CD4-positive, alpha-beta memory T cell (primary cell): ENCODE measurements at regions of chrX and their contacts with region 1.

Region 1: GRCh38 chrX:119871599-119872395 is at the starts of genes NDUFA1 and RNF113A:
- DNase-seq: peak; percentile 86 to 91 (median 89)
- H3K4me3 ChIP-seq: peak within 1 kb of the TSS; percentile 78 to 89
- H3K4me3 Mint-ChIP-seq: peak within 1 kb of the TSS; percentile 93 to 100 (median 96)
- H3K27ac ChIP-seq: peak within 1 kb of the TSS; percentile 85
- H3K27ac Mint-ChIP-seq: peak within 1 kb of the TSS; percentile 98 to 100 (median 98)
- H3K4me1 ChIP-seq: peaks cover 15% of the 10 kb centered on the region
- H3K4me1 Mint-ChIP-seq: peaks cover 3 to 39% (median 17%) of the 10 kb centered on the region in 4 donors
- H3K27me3 ChIP-seq: no peaks in the 10 kb centered on the region
- H3K27me3 Mint-ChIP-seq: no peaks in the 10 kb centered on the region
- total RNA-seq, gene NDUFA1: 59.7 to 62.4 TPM
- total RNA-seq, gene RNF113A: 43.0 to 45.3 TPM

Region 2: DNA sequence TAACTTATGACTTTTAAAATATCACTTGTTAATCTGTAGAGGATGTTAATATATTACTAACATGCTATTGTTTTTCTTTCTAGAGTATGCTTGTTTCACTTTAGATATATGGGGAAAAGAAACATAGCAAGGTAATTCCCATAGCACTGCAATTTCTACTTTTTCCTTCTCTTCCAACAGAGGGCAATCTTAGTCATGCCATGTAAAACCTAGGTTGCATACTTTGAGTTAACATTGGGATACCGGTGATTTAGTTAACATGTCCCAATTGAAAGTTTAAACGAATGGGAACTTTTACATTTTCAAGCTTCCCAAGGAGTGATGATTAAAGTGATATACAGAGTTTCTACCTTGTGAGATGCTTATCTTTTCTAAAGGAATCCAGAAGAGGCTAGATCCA is 1233.8 kb before region 1 on chrX:
- CTCF ChIA-PET with region 1: no interaction called
- POLR2A ChIA-PET with region 1: no interaction called
- intact Hi-C with region 1: no loop called
- DNase-seq: no peak
- H3K4me3 ChIP-seq: no peak overlapping the region
- H3K4me3 Mint-ChIP-seq: no peak overlapping the region
- H3K27ac ChIP-seq: no peak overlapping the region
- H3K27ac Mint-ChIP-seq: peak overlapping the region in 1 of 7 donors; percentile 35
- H3K4me1 ChIP-seq: no peaks in the 10 kb centered on the region
- H3K4me1 Mint-ChIP-seq: no peaks in the 10 kb centered on the region
- H3K27me3 ChIP-seq: no peaks in the 10 kb centered on the region
- H3K27me3 Mint-ChIP-seq: no peaks in the 10 kb centered on the region

Region 3: DNA sequence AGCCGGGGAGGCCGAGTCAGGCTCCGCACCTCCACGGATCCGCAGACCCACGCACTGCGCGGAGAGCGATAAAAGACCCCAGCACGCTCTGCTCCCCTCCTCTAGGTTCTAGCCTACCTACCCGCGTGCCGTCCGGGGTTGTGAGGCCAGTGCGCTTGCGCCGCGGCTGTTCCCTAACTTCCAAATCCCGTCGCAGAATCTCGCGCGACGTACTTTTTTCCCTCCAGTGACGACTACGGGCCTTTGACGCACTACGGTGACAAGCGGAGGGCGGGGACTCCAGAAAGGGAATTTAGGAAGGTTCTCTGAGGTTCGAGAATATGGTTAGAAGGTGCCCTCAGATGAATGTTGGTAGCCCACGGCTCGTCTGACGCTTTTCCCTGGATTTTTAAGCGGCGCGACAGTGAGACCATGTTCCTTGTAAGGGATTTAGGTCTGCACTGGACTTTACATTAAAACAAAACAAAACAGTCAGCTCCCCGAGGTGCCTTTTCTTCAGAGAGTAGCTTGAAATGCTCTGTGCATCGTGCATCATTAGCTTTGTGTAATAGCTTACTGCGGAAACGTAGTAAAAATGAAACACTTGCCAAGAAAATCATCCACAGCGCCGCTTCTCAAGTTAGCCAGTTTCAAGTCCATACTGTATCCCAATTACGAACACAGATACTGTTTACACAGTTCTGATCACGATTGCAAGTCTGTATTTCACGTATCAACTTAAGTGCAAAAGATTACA is 265.3 kb before region 1 on chrX and contains the start of gene NKRF:
- CTCF ChIA-PET with region 1: no interaction called
- POLR2A ChIA-PET with region 1: no interaction called
- intact Hi-C with region 1: loop called (anchors 2 kb)
- DNase-seq: peak; percentile 87 to 94 (median 89)
- H3K4me3 ChIP-seq: peak within 1 kb of the TSS; percentile 73 to 84
- H3K4me3 Mint-ChIP-seq: peak within 1 kb of the TSS; percentile 91 to 97 (median 95)
- H3K27ac ChIP-seq: peak within 1 kb of the TSS; percentile 85
- H3K27ac Mint-ChIP-seq: peak within 1 kb of the TSS; percentile 93 to 99 (median 99)
- H3K4me1 ChIP-seq: peaks cover 26% of the 10 kb centered on the region
- H3K4me1 Mint-ChIP-seq: peaks cover 10 to 46% (median 28%) of the 10 kb centered on the region in 4 donors
- H3K27me3 ChIP-seq: no peaks in the 10 kb centered on the region
- H3K27me3 Mint-ChIP-seq: no peaks in the 10 kb centered on the region
- total RNA-seq, gene NKRF: 13.0 to 14.2 TPM

Region 4: GRCh38 chrX:119655125-119655524 is 216.7 kb before region 1 on chrX:
- CTCF ChIA-PET with region 1: no interaction called
- POLR2A ChIA-PET with region 1: no interaction called
- intact Hi-C with region 1: no loop called
- DNase-seq: peak in 2 of 5 donors; percentile 41 to 79
- H3K4me3 ChIP-seq: no peak overlapping the region
- H3K4me3 Mint-ChIP-seq: peak overlapping the region in 5 of 8 donors; percentile 40 to 72 (median 59)
- H3K27ac ChIP-seq: peak overlapping the region; percentile 41
- H3K27ac Mint-ChIP-seq: peak overlapping the region; percentile 80 to 96 (median 91)
- H3K4me1 ChIP-seq: peaks cover 24% of the 10 kb centered on the region
- H3K4me1 Mint-ChIP-seq: peaks cover 26 to 50% (median 42%) of the 10 kb centered on the region in 4 donors
- H3K27me3 ChIP-seq: no peaks in the 10 kb centered on the region
- H3K27me3 Mint-ChIP-seq: no peaks in the 10 kb centered on the region

Region 5: DNA sequence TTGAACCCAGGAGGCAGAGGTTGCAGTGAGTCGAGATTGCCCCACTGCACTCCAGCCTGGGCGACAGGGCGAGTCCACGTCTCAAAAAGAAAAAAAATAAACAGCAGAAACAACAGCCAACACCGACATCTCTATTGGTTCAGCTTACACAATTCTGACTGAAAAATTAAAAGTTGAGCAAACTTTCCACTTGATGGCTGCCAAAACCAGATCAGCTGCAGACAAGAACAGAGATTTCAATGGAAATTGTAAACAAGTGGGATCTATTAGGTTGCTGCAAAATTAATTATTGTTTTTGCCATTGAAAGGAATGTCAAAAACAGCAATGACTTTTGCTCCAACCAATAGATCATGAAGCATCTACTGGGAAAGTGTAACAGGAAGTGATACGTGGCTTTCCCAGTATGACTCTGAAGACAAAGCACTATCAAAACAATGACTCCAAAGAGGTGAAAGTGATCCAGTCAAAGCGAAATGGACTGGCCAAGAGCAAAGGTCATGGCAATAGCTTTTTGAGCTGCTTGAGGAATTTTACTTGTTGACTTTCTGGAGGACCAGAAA is 45.3 kb before region 1 on chrX:
- CTCF ChIA-PET with region 1: no interaction called
- POLR2A ChIA-PET with region 1: interaction called, 11 read pairs
- intact Hi-C with region 1: no loop called
- DNase-seq: no peak
- H3K4me3 ChIP-seq: no peak overlapping the region
- H3K4me3 Mint-ChIP-seq: no peak overlapping the region
- H3K27ac ChIP-seq: no peak overlapping the region
- H3K27ac Mint-ChIP-seq: no peak overlapping the region
- H3K4me1 ChIP-seq: peaks cover 8% of the 10 kb centered on the region
- H3K4me1 Mint-ChIP-seq: peaks cover 6 to 20% (median 9%) of the 10 kb centered on the region in 4 donors
- H3K27me3 ChIP-seq: no peaks in the 10 kb centered on the region
- H3K27me3 Mint-ChIP-seq: no peaks in the 10 kb centered on the region

Region 6: GRCh38 chrX:119887721-119888425 is 16.1 kb after region 1 on chrX:
- CTCF ChIA-PET with region 1: interaction called, 3 read pairs
- POLR2A ChIA-PET with region 1: interaction called, 5 read pairs
- intact Hi-C with region 1: loop called (anchors 2 kb)
- DNase-seq: peak; percentile 40 to 54 (median 50)
- H3K4me3 ChIP-seq: peak overlapping the region in 1 of 2 donors; percentile 27
- H3K4me3 Mint-ChIP-seq: peak overlapping the region in 7 of 8 donors; percentile 17 to 71 (median 64)
- H3K27ac ChIP-seq: no peak overlapping the region
- H3K27ac Mint-ChIP-seq: no peak overlapping the region
- H3K4me1 ChIP-seq: peaks cover 9% of the 10 kb centered on the region
- H3K4me1 Mint-ChIP-seq: peaks cover 3 to 18% (median 7%) of the 10 kb centered on the region in 4 donors
- H3K27me3 ChIP-seq: no peaks in the 10 kb centered on the region
- H3K27me3 Mint-ChIP-seq: peaks cover 0 to 1% of the 10 kb centered on the region in 2 donors